Activated CD4-positive, alpha-beta T cell treated with anti-CD3 and anti-CD28 coated beads, Interleukin-2, amount 10 ng/mL, durations not matched to agents 24 days and 14 days (primary cell): ENCODE measurements at regions of chr1 and their contacts with region 1.

Region 1: DNA sequence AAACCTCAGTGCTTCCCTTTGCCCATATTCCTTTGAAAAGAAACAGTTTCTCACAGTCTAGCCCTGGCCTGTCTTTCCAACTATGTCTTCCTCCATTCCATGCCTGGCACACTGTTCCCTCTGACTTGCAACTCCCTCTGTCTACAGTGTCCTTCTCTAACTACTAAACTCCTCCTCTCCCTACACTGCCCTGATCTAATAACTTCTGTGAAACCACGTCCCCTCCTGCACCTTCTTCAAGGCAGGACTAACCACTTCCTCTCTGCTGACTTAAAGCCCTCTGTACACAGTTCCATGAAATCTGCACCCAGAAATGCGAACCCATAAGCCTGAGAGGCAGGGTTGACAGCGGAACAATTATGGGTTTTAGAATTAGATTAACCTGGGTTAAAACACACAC is 62.2 kb upstream of the ATP1B1 start:
- DNase-seq: peak; percentile 87
- H3K4me3 Mint-ChIP-seq: peak overlapping the region; percentile 70
- H3K27ac Mint-ChIP-seq: peak overlapping the region; percentile 83
- H3K4me1 Mint-ChIP-seq: peaks cover 65% of the 10 kb centered on the region
- H3K27me3 Mint-ChIP-seq: no peaks in the 10 kb centered on the region

Region 2: DNA sequence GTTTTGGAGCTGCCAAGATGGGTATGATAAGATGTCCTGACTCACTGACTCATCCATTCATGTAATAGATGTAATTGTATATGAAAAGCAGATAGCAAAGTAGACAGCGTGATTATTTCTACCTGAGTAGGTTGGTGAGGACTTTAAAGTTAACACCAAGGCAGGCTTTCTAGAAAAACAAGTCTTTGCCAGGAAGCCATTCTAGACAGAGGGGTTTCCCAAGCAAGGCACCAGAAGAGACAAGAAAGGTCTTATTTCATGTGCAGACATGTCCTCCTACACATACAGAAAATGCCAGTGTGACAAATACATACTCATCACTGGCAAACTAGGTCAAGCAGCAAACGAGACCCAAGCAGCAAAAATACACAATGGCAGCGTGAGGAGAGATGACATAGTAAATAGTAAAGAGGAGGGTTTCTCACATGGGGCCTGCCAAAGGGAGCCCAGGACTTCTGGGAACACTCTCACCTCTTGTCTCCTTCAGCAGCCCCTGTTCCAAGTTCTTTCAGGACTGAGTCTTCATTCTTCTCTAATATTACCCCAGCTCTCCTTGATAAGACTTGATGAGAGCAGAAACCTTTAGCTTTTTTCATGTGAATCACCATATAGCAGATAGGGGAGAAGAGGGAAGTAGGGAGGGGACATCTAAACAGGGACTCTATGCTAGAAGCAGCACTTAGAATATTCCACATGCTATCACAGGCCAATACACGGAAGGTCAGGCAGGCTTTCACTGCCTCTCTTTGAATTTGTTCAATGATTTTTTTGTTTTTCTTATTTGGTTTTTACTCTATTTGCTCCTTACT is 52.4 kb before region 1 on chr1:
- intact Hi-C with region 1: loop called (anchors 2 kb)
- DNase-seq: peak; percentile 61
- H3K4me3 Mint-ChIP-seq: peak overlapping the region; percentile 1
- H3K27ac Mint-ChIP-seq: peak overlapping the region; percentile 86
- H3K4me1 Mint-ChIP-seq: peaks cover 17% of the 10 kb centered on the region
- H3K27me3 Mint-ChIP-seq: peaks cover 5% of the 10 kb centered on the region

Region 3: DNA sequence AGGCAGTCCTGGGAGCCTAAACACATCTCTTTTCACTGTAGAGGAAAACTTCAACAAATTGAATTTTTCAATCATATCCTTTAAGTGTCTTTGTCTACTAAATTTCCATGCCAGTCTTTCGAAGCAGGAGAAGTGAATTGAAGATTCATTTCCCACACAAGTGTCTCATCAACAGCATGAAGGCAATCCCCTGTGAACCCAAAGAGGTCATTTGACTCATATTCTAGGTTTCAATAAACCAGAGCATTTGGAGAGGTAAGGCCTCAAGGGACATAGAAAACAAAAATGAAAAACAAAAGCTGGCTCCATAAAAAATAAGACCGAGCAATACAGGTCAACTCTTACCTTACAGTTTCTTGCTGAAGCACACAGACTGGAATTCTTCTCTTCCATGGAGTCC is 31.9 kb before region 1 on chr1:
- intact Hi-C with region 1: loop called (anchors 2 kb)
- DNase-seq: no peak
- H3K4me3 Mint-ChIP-seq: no peak overlapping the region
- H3K27ac Mint-ChIP-seq: peak overlapping the region; percentile 68
- H3K4me1 Mint-ChIP-seq: peaks cover 11% of the 10 kb centered on the region
- H3K27me3 Mint-ChIP-seq: no peaks in the 10 kb centered on the region

Region 4: DNA sequence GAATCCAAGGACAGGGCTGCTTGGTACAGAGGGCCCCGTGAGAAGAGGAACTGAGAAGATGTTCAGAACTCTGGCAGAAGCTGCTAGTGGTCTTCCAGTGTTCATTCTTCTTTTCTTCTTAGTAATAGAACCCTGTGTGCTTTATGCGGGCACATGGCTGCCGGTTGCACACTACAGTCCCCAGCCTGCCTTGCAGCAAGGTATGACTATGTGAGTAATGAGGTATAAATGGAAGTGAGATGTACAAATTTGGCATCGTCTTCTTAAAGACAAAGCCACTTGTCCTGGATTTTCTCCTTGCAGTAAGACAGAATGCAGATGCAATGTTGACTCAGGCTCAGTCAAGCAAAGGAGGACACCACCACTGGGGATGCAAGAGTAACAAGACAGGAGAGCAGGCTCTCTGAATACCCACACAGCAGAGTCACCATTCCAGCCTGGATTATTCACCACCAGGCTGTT is 47.2 kb after region 1 on chr1:
- intact Hi-C with region 1: loop called (anchors 5 kb)
- DNase-seq: no peak
- H3K4me3 Mint-ChIP-seq: no peak overlapping the region
- H3K27ac Mint-ChIP-seq: no peak overlapping the region
- H3K4me1 Mint-ChIP-seq: peaks cover 9% of the 10 kb centered on the region
- H3K27me3 Mint-ChIP-seq: peaks cover 7% of the 10 kb centered on the region

Region 5: DNA sequence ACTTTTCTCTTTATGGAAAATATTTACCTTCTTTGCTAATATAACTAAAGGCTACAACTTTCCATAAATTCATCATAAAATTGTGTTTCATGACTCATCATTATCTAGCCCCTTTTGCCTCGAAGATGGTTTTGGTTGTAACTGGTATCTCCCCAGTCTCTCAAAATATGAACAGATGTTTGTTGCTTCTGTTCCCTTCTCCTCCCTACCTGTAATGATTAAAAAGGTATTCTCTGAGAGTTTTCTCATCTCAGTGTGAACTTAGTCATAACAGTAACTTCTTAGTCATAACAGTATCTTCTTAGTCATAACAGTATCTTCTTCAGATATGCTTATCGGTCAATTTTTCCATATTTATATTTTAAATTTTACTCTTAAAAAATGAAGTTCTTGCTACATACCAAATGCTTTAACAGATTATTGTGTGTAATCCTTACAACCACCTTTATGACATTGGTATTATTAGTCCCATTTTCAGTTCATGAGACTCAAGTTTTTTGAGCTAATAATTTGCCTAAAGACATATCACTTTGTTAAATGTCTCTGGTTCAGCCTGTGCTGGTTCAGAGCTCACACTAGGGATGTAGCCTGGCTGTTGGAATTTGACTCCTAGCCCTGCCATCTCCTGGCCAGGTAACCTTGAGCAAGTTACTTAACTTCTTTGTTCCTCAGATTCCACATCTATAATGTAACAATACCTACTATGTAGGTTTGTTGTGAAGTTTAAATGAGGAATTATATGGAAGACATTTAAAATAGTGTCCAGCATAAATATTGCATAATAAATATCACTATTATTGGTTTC is 94.8 kb after region 1 on chr1:
- intact Hi-C with region 1: loop called (anchors 2 kb)
- DNase-seq: no peak
- H3K4me3 Mint-ChIP-seq: peak overlapping the region; percentile 8
- H3K27ac Mint-ChIP-seq: peak overlapping the region; percentile 81
- H3K4me1 Mint-ChIP-seq: peaks cover 15% of the 10 kb centered on the region
- H3K27me3 Mint-ChIP-seq: no peaks in the 10 kb centered on the region

Region 6: GRCh38 chr1:169326956-169327268 is 282.6 kb after region 1 on chr1:
- intact Hi-C with region 1: loop called (anchors 10 kb)
- DNase-seq: no peak
- H3K4me3 Mint-ChIP-seq: peak overlapping the region; percentile 4
- H3K27ac Mint-ChIP-seq: peak overlapping the region; percentile 13
- H3K4me1 Mint-ChIP-seq: peaks cover 11% of the 10 kb centered on the region
- H3K27me3 Mint-ChIP-seq: no peaks in the 10 kb centered on the region